ENCODE measurements at regions of chr3 and their contacts with region 1.

Region 1: DNA sequence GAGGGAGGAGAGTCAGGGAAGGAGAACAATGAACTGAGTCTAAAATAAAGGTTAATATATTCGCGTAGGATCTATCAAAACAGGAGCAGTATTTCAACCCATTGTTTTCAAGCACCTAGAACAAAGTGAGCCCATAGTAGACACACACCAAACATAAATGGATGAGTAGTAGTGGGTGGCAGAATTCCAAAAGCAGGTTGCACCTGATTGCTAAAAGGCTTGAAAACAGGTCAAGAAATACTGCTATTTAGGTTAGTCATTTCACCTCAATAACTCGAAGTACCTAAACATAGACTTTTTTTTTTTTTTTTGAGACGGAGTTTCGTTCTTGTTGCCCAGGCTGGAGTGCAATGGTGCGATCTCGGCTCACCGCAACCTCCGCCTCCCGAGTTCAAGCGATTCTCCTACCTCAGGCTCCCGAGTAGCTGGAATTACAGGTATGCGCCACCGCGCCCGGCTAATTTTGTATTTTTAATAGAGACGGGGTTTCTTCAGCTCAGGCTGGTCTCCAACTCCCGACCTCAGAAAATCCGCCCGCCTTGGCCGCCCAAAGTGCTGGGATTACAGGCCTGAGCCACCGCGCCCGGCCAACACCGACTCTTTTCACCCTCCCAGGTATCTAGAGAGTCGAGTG is 855 bp upstream of the ABHD5 start:
- DNase-seq: no peak
- H3K4me3 ChIP-seq: peak overlapping the region; percentile 81 to 95 (median 94)
- H3K27ac ChIP-seq: peak overlapping the region; percentile 95 to 99
- H3K4me1 ChIP-seq: peaks cover 0 to 3% of the 10 kb centered on the region in 2 donors
- H3K27me3 ChIP-seq: no peaks in the 10 kb centered on the region
- CTCF ChIP-seq: no peak
- POLR2A ChIP-seq: no peak

Region 2: GRCh38 chr3:43707998-43708397 is 18.1 kb after region 1 on chr3:
- intact Hi-C with region 1: loop called (anchors 1 kb)
- DNase-seq: no peak
- H3K4me3 ChIP-seq: no peak overlapping the region
- H3K27ac ChIP-seq: peak overlapping the region; percentile 49 to 66
- H3K4me1 ChIP-seq: no peaks in the 10 kb centered on the region
- H3K27me3 ChIP-seq: no peaks in the 10 kb centered on the region
- CTCF ChIP-seq: no peak
- POLR2A ChIP-seq: no peak

Region 3: DNA sequence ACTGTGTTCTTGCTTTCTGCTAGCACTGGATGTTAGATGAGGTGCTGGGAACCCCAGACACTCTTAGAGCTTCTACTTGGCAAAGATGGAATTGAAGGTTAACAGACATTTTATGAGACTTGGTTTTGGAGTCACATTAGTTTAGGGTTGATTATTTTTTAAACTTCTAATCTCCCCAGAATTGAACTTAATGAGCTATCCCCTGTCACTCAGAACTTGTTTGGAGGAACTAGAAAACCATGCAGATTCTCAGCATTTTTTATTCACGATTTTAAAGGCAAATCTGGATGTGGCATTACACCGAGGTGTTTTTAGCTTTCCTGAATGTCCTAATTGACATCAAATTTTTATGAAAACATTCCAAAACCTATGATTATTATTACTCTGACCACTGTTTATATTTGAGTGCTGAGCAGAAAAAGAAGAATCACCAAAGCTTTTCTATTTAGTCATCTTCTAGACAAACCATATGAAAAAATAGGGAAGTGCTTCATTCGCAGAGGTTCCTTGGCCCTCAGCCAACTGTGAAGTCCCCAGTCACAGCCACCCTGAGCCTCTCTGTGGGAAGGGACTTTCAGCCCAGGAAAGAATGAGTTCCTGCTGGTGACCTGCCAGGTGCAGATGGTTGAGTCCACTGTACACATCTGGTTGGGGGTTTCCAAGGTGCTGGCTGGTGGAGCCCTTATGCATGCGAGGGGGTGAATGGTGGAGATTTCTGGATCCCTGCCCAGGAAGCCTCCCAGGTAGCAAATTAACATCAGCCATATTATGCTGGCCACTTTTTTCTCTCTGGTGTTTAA is 355.8 kb after region 1 on chr3:
- intact Hi-C with region 1: loop called (anchors 10 kb)
- DNase-seq: peak in 1 of 2 donors; percentile 20
- H3K4me3 ChIP-seq: no peak overlapping the region
- H3K27ac ChIP-seq: no peak overlapping the region
- H3K4me1 ChIP-seq: peaks cover 0 to 5% of the 10 kb centered on the region in 2 donors
- H3K27me3 ChIP-seq: no peaks in the 10 kb centered on the region
- CTCF ChIP-seq: no peak
- POLR2A ChIP-seq: no peak

Region 4: GRCh38 chr3:44685128-44685800 is 995.4 kb after region 1 on chr3:
- intact Hi-C with region 1: no loop called
- DNase-seq: peak; percentile 42 to 61
- H3K4me3 ChIP-seq: peak overlapping the region; percentile 73 to 84 (median 81)
- H3K27ac ChIP-seq: peak overlapping the region in 1 of 2 donors; percentile 62
- H3K4me1 ChIP-seq: no peaks in the 10 kb centered on the region
- H3K27me3 ChIP-seq: peaks cover 0 to 12% of the 10 kb centered on the region in 2 donors
- CTCF ChIP-seq: no peak
- POLR2A ChIP-seq: no peak

Measured in breast epithelium (tissue), 4 donors.